Natural killer cell (primary cell): ENCODE measurements at regions of chr2 and their contacts with region 1.

Region 1: GRCh38 chr2:37156857-37157714 is at the start of gene EIF2AK2:
- DNase-seq: peak; percentile 70 to 90
- ATAC-seq: peak; percentile 97
- H3K4me3 ChIP-seq: peak within 1 kb of the TSS; percentile 87
- H3K4me3 Mint-ChIP-seq: peak within 1 kb of the TSS; percentile 94
- H3K27ac ChIP-seq: peak within 1 kb of the TSS; percentile 63
- H3K27ac Mint-ChIP-seq: peak within 1 kb of the TSS; percentile 87 to 89
- H3K4me1 ChIP-seq: peaks cover 19% of the 10 kb centered on the region
- H3K4me1 Mint-ChIP-seq: peaks cover 37 to 39% of the 10 kb centered on the region in 2 donors
- H3K27me3 ChIP-seq: no peaks in the 10 kb centered on the region
- H3K27me3 Mint-ChIP-seq: no peaks in the 10 kb centered on the region
- CTCF ChIP-seq: no peak
- total RNA-seq, gene EIF2AK2: 29.9 to 47.3 (median 43.9) TPM

Region 2: DNA sequence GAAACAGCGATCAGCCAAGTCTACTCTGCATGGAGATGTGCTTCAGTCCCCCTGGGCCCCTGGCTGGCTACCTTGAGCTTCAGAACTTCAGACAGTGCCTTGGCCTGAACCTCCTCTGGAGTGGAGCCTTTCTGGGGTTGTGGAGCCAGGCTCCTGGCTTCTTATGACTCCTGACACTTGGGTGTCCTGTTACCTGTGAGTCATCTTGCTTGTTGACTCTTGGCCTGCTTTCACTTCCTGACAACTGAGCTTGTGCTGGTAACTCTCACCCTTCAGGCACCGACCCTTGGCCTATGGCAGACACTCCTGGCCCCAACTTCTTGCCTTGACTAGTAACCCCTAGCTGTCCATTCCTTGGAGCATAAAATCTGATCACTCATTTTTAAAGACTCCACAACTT is 507.1 kb before region 1 on chr2:
- intact Hi-C with region 1: no loop called
- DNase-seq: no peak
- ATAC-seq: no peak
- H3K4me3 ChIP-seq: no peak overlapping the region
- H3K4me3 Mint-ChIP-seq: no peak overlapping the region
- H3K27ac ChIP-seq: no peak overlapping the region
- H3K27ac Mint-ChIP-seq: no peak overlapping the region
- H3K4me1 ChIP-seq: no peaks in the 10 kb centered on the region
- H3K4me1 Mint-ChIP-seq: no peaks in the 10 kb centered on the region
- H3K27me3 ChIP-seq: no peaks in the 10 kb centered on the region
- H3K27me3 Mint-ChIP-seq: peaks cover 0 to 10% of the 10 kb centered on the region in 2 donors
- CTCF ChIP-seq: no peak

Region 3: GRCh38 chr2:37196320-37197195 is 39.5 kb after region 1 on chr2 and contains the start of gene CEBPZOS:
- intact Hi-C with region 1: loop called (anchors 2 kb)
- DNase-seq: peak; percentile 91 to 95
- ATAC-seq: peak; percentile 86 to 92 (median 87)
- H3K4me3 ChIP-seq: peak within 1 kb of the TSS; percentile 85
- H3K4me3 Mint-ChIP-seq: peak within 1 kb of the TSS; percentile 100
- H3K27ac ChIP-seq: peak within 1 kb of the TSS; percentile 87
- H3K27ac Mint-ChIP-seq: peak within 1 kb of the TSS; percentile 98
- H3K4me1 ChIP-seq: peaks cover 18% of the 10 kb centered on the region
- H3K4me1 Mint-ChIP-seq: peaks cover 27 to 28% of the 10 kb centered on the region in 2 donors
- H3K27me3 ChIP-seq: no peaks in the 10 kb centered on the region
- H3K27me3 Mint-ChIP-seq: no peaks in the 10 kb centered on the region
- CTCF ChIP-seq: no peak
- total RNA-seq, gene CEBPZOS: 30.3 to 37.0 (median 30.9) TPM

Region 4: GRCh38 chr2:37263839-37264238 is 106.8 kb after region 1 on chr2:
- intact Hi-C with region 1: no loop called
- DNase-seq: no peak
- ATAC-seq: no peak
- H3K4me3 ChIP-seq: no peak overlapping the region
- H3K4me3 Mint-ChIP-seq: no peak overlapping the region
- H3K27ac ChIP-seq: no peak overlapping the region
- H3K27ac Mint-ChIP-seq: peak overlapping the region; percentile 9 to 34
- H3K4me1 ChIP-seq: no peaks in the 10 kb centered on the region
- H3K4me1 Mint-ChIP-seq: peaks cover 5 to 6% of the 10 kb centered on the region in 2 donors
- H3K27me3 ChIP-seq: no peaks in the 10 kb centered on the region
- H3K27me3 Mint-ChIP-seq: no peaks in the 10 kb centered on the region
- CTCF ChIP-seq: no peak